Activated CD4-positive, alpha-beta T cell treated with anti-CD3 and anti-CD28 coated beads for 36 hours (primary cell): ENCODE measurements at regions of chr17 and their contacts with region 1.

Region 1: GRCh38 chr17:58658804-58659713 is 32.8 kb downstream of the TEX14 start:
- DNase-seq: peak; percentile 84
- ATAC-seq: peak; percentile 91
- H3K4me3 Mint-ChIP-seq: peak overlapping the region; percentile 70
- H3K27ac Mint-ChIP-seq: peak overlapping the region; percentile 97
- H3K4me1 Mint-ChIP-seq: peaks cover 18% of the 10 kb centered on the region
- H3K27me3 Mint-ChIP-seq: peaks cover 3% of the 10 kb centered on the region

Region 2: DNA sequence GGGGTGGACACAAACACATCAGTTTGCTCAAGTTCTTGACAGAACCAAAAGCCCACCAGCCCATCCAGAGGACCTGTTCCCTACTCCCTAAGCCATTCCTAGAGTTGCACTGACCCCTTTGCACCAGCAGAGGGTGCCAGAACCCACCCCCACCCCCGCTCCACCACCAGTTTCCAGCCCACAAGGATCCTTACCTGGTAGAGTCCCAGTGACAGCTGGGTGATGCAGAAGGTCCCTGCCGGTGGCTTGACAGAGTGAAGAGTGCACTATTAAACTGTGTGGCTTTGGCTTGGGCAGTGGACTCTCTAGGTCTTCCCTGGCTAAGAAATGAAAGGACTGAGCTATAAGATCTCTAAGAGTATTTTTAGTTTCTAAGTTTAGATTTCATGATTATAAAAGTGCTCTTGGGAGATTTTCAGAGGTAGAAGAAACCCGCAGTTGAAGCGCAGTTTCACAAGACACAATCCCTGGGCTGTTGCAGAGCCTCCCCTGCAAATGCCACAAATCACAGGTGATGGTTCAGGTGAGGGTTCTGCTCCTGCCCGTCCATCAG is 71.3 kb before region 1 on chr17:
- CTCF ChIA-PET with region 1: no interaction called
- POLR2A ChIA-PET with region 1: interaction called, 7 read pairs
- intact Hi-C with region 1: loop called in 1 of 2 experiments (anchors 1 kb)
- DNase-seq: peak; percentile 79
- ATAC-seq: peak; percentile 97
- H3K4me3 Mint-ChIP-seq: no peak overlapping the region
- H3K27ac Mint-ChIP-seq: no peak overlapping the region
- H3K4me1 Mint-ChIP-seq: no peaks in the 10 kb centered on the region
- H3K27me3 Mint-ChIP-seq: no peaks in the 10 kb centered on the region

Region 3: GRCh38 chr17:58595326-58595725 is 63.7 kb before region 1 on chr17:
- CTCF ChIA-PET with region 1: no interaction called
- POLR2A ChIA-PET with region 1: interaction called, 10 read pairs
- intact Hi-C with region 1: no loop called
- DNase-seq: no peak
- ATAC-seq: no peak
- H3K4me3 Mint-ChIP-seq: no peak overlapping the region
- H3K27ac Mint-ChIP-seq: no peak overlapping the region
- H3K4me1 Mint-ChIP-seq: no peaks in the 10 kb centered on the region
- H3K27me3 Mint-ChIP-seq: no peaks in the 10 kb centered on the region

Region 4: GRCh38 chr17:58643140-58643539 is 15.9 kb before region 1 on chr17:
- CTCF ChIA-PET with region 1: no interaction called
- POLR2A ChIA-PET with region 1: interaction called, 15 read pairs
- intact Hi-C with region 1: no loop called
- DNase-seq: no peak
- ATAC-seq: peak; percentile 69
- H3K4me3 Mint-ChIP-seq: no peak overlapping the region
- H3K27ac Mint-ChIP-seq: no peak overlapping the region
- H3K4me1 Mint-ChIP-seq: no peaks in the 10 kb centered on the region
- H3K27me3 Mint-ChIP-seq: no peaks in the 10 kb centered on the region

Region 5: DNA sequence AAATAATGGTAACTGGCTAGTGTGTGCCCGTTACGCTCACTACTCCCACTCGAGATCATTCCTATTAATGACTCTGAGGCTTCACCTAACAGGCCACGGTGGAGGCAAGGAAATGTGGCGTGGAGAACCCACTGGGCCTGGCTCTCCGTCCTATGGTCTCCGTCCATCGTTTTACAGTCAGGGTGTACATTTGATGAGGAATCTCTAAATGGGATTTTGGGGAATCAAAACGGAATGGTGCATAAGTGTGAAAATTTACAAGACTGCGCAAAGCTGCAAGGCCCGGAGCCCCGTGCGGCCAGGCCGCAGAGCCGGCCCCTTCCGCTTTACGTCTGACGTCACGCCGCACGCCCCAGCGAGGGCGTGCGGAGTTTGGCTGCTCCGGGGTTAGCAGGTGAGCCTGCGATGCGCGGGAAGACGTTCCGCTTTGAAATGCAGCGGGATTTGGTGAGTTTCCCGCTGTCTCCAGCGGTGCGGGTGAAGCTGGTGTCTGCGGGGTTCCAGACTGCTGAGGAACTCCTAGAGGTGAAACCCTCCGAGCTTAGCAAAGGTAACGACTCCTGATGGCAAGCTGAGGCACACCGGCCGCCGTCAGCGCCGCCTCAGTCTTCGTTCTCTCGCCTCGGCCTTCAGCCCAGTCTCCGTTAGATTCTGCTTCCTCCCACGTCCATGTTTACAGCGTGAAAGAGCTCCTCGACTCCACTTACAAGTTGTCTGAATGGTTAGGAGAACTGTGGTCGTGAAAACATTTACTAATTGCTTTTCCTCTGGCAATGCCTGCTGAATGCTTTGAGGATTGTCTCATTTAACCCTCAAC is 33.4 kb after region 1 on chr17 and contains the start of gene RAD51C:
- CTCF ChIA-PET with region 1: interaction called, 3 read pairs
- POLR2A ChIA-PET with region 1: interaction called, 8 read pairs
- intact Hi-C with region 1: loop called (anchors 1 kb)
- DNase-seq: peak; percentile 94
- ATAC-seq: peak; percentile 96
- H3K4me3 Mint-ChIP-seq: peak within 1 kb of the TSS; percentile 92
- H3K27ac Mint-ChIP-seq: peak within 1 kb of the TSS; percentile 98
- H3K4me1 Mint-ChIP-seq: peaks cover 27% of the 10 kb centered on the region
- H3K27me3 Mint-ChIP-seq: no peaks in the 10 kb centered on the region
- total RNA-seq, gene RAD51C: 85.4 to 87.2 TPM

Region 6: DNA sequence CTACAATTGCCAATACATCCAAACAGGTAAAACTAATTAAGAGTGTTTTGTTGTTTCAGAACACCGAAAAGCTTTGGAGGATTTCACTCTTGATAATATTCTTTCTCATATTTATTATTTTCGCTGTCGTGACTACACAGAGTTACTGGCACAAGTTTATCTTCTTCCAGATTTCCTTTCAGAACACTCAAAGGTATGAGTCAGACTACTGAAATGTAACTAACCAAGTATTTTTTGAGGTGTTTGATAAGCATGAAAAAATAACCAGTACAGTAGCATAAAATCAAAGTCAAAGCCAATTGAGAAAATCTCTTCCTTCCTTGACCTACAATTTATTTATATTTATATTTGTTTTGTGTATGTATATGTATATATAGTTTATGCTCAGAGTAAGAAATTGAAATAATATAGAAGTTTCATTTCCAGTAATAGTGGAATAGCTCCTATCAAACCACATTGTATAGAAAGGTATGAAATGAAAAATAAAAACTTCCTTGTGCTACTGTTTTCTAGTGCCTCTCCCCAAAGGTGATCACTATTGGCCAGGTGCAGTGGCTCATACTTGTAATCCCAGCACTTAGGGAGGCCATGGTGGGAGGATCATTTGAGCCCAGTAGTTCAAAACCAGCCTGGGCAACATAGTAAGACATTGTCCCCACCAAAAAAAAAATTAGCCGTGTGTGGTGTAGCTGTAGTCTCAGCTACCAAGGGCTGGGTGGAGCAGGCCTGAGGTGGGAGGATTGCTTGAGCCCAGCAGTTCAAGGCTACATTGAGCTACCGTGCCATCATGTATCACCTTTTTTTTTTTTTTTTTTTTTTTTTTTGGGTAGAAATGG is 44.3 kb after region 1 on chr17:
- CTCF ChIA-PET with region 1: no interaction called
- POLR2A ChIA-PET with region 1: interaction called, 6 read pairs
- intact Hi-C with region 1: loop called in 1 of 2 experiments (anchors 2 kb)
- DNase-seq: peak; percentile 16
- ATAC-seq: peak; percentile 67
- H3K4me3 Mint-ChIP-seq: no peak overlapping the region
- H3K27ac Mint-ChIP-seq: no peak overlapping the region
- H3K4me1 Mint-ChIP-seq: peaks cover 29% of the 10 kb centered on the region
- H3K27me3 Mint-ChIP-seq: no peaks in the 10 kb centered on the region